Dorsolateral prefrontal cortex (tissue), 120 donors: ENCODE measurements at regions of chr14 and their contacts with region 1.

Region 1: DNA sequence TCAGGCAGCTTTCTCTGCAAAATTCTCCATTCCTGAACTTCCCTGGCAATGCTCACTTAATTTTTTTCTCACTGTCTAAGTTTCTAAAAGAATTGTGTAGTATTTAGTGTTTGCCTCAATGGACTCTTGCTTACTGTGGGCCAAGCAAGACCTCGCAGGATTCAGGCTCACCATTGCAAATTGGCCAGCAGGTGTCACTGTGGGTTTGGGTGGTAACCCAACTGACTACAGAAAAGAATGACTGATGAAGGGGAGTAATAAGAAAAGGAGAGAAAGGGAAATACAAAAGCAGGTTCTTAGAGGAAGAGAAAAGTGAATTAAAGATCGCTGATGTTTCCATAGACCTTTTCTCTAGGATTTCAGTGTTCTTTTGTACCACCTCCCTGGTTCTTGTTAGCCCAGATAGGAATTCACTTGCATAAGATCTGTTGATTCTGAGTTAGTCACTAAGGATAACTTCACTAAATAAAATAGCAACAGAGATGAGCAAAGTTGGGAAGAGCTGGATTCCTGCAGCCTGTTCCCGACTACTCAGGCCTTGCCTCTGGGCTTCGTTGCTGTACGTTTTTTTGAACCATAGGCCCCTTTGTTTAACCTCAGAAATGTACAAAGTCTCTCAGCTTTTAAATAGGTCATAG is 386.5 kb upstream of the DDHD1 start:
- DNase-seq: peak; percentile 64 to 88 (median 80)
- H3K4me3 ChIP-seq: no peak overlapping the region
- H3K27ac ChIP-seq: peak overlapping the region in 1 of 59 donors; percentile 10
- H3K27me3 ChIP-seq: no peaks in the 10 kb centered on the region
- CTCF ChIP-seq: peak; percentile 68 to 96 (median 89)

Region 2: GRCh38 chr14:53596853-53597525 is 57.4 kb after region 1 on chr14:
- intact Hi-C with region 1: no loop called
- DNase-seq: no peak
- H3K4me3 ChIP-seq: no peak overlapping the region
- H3K27ac ChIP-seq: no peak overlapping the region
- H3K27me3 ChIP-seq: no peaks in the 10 kb centered on the region
- CTCF ChIP-seq: no peak

Region 3: DNA sequence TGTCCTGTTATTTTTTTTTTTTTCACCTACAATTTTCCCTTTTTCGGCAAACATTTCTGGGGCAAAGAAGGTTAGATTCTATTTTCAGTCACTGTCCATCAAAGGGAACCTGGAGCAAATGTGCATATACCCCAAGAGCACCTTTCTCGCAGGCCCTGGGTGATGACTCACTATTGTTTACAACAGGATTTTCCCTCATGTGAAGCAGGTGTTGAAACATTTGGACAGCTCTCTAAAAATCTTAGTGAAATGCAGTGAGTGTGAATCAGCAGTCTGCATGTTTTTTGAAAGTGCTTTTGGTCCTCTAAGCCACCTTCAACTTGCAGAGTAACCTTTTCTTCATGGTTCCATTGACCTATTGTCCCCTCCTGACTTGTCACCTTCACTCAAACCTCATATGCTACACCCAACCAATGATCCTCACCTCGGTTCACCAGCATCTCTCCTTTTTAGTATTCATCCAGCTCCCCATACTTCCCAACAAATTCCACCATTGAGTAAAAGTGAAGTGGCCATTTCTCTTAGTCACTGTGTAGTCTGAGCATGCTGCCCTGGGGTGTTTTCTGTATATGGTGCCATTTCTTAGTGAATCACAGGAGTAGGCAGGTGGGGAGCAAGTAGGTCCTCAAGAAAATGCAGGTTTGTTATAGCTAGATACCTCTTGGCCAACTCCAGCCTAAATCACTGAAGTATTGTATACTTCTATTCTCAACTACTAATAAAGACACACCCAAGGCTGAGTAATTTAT is 156.8 kb after region 1 on chr14:
- intact Hi-C with region 1: no loop called
- DNase-seq: no peak
- H3K4me3 ChIP-seq: no peak overlapping the region
- H3K27ac ChIP-seq: no peak overlapping the region
- H3K27me3 ChIP-seq: peaks cover 0 to 5% (median 0%) of the 10 kb centered on the region in 45 donors
- CTCF ChIP-seq: no peak

Region 4: GRCh38 chr14:53793790-53794505 is 254.3 kb after region 1 on chr14:
- intact Hi-C with region 1: loop called in 1 of 2 experiments (anchors 10 kb)
- DNase-seq: peak in 5 of 10 donors; percentile 8 to 64 (median 37)
- H3K4me3 ChIP-seq: peak overlapping the region in 3 of 59 donors; percentile 7 to 14 (median 11)
- H3K27ac ChIP-seq: peak overlapping the region in 14 of 59 donors; percentile 1 to 72 (median 38)
- H3K27me3 ChIP-seq: peaks cover 0 to 10% (median 0%) of the 10 kb centered on the region in 45 donors
- CTCF ChIP-seq: no peak

Region 5: DNA sequence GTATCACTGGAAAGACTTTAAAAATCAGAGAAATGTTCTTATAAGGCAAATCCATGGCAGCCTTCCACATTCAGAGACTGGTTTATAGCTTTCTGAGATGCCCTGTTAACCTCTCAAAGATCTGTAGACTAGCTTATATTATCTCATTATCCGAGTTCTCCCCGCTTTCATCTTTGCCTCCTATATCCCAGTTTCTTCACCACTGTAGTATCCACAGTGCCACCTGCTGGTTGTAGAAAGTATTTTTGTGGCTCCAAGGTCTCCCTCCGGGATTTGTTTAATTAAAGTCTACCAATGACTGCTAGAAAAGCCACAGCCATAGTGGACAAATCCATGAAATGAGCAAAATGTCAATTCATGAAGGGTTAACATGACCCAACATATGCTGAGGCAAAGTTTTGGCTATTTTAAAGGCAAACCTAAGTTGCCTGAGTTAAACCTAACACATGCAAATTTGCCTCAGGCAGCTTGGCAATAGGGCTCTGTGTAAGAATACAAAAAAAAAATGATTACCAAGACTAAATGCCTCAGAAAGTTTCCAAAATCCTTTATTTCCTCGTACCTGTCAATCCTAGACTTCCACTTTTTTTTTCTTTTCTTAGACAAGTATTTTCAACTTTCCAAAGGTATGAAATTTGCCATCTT is 635.8 kb after region 1 on chr14:
- intact Hi-C with region 1: loop called (anchors 2 to 5 kb)
- DNase-seq: peak in 6 of 10 donors; percentile 44 to 74 (median 60)
- H3K4me3 ChIP-seq: no peak overlapping the region
- H3K27ac ChIP-seq: no peak overlapping the region
- H3K27me3 ChIP-seq: no peaks in the 10 kb centered on the region
- CTCF ChIP-seq: peak; percentile 77 to 97 (median 89)

Region 6: DNA sequence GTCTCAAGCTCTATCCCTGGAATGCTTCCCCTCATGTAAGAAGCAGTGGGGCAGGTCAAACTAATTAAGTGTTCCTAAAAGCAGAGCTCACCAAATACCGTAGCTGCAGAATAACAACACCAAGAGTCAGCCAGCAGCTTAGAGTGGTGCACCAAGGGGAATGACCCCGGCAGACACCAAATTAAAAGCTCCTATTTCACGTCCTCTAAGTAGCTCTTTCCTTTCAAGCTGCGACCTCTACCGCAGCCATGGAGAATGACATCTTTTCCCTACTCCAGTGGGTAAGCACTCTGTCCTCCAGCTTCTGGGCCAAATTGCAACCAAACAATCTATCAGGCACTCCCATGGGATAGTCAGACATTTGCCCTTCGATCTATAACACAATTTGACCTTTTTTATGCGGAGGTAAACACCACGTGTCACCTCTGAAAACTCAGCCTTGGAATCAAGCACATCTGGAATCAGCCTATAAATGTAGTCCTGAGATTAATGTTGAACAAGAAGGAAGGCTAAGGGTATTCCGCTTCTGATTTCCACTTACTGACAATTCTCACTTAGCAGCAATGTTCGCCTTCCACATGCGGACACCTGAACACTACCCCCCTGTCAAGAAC is 789.6 kb after region 1 on chr14:
- intact Hi-C with region 1: loop called in 1 of 2 experiments (anchors 5 kb)
- DNase-seq: peak in 4 of 10 donors; percentile 5 to 45 (median 36)
- H3K4me3 ChIP-seq: peak overlapping the region in 3 of 59 donors; percentile 25 to 35 (median 31)
- H3K27ac ChIP-seq: no peak overlapping the region
- H3K27me3 ChIP-seq: no peaks in the 10 kb centered on the region
- CTCF ChIP-seq: peak in 55 of 56 donors; percentile 27 to 77 (median 65)

Region 7: GRCh38 chr14:54338696-54339317 is 799.2 kb after region 1 on chr14:
- intact Hi-C with region 1: loop called in 1 of 2 experiments (anchors 5 kb)
- DNase-seq: no peak
- H3K4me3 ChIP-seq: no peak overlapping the region
- H3K27ac ChIP-seq: no peak overlapping the region
- H3K27me3 ChIP-seq: no peaks in the 10 kb centered on the region
- CTCF ChIP-seq: peak in 37 of 56 donors; percentile 10 to 55 (median 35)

Region 8: DNA sequence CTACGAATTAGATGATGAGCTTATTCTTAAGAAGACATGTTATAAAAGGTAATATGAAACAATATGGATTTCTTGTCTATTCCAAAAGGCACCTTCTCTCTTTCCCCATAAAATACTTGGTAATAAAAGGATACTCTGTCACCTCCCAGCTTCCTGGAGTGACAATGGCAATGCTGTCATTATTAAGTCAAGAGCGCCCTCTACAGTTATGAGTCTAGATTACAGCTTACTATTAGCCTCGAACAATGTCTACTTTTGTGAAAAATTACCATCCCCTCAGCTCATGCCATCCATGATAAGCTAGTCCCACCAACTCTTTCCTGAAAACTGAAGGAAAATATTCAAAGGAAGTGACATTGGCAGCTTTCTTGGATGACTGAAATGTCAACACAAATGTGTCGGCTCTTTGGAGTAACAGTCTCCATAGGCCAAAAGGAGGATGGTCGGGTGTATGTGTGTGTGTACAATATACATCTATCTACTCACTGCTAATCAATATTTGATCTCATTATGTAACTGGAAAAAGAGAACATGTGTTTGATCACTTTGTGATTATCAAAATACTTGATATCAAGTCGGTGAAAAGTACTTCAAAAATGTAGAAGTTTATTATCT is 808.5 kb after region 1 on chr14:
- intact Hi-C with region 1: loop called in 1 of 2 experiments (anchors 5 kb)
- DNase-seq: peak in 1 of 10 donors; percentile 14
- H3K4me3 ChIP-seq: no peak overlapping the region
- H3K27ac ChIP-seq: peak overlapping the region in 5 of 59 donors; percentile 45 to 81 (median 63)
- H3K27me3 ChIP-seq: no peaks in the 10 kb centered on the region
- CTCF ChIP-seq: peak; percentile 60 to 94 (median 84)